ENCODE measurements at regions of chr16 and their contacts with region 1.

Region 1: DNA sequence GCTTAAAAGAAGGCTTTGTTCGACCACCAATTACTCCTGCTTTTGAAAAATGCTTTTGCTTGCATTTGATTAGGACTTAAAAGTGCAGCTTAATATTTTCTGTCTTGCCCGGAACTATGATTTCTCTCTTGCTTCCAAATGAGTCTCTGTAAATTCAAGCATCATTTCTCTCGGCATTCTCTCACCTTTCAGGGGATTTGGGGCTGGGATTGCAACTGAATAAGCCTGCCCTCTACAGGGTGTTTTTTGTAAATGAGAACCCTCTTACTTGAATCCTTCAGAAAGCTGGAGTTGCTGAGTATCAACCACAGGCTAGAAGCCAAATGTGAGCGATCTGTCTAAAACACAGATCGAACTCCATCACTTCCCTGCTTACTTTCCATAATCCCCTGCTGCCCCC is 234.6 kb downstream of the TMEM114 start:
- DNase-seq: no peak
- H3K4me3 ChIP-seq: no peak overlapping the region
- CTCF ChIP-seq: no peak
- POLR2A ChIP-seq: no peak

Region 2: DNA sequence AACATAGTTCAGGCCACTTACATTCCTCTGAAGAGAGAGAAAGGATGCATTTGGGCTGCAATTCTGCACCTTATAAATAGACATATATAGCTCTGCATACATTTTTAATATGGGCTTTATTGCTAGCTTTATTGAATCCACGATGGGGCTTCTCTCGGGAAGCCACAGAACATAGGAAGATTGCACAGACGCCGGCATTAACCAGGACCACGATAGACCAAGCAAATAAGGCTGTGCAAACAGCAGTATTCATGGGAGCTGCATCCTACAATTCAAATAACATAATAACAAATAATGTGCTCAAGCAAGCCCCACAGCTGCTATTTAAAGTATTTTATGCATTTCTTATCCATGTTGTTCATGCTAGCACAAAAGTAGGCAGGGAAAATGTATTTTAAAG is 197.6 kb before region 1 on chr16:
- intact Hi-C with region 1: loop called (anchors 5 kb)
- DNase-seq: no peak
- H3K4me3 ChIP-seq: no peak overlapping the region
- CTCF ChIP-seq: no peak
- POLR2A ChIP-seq: no peak

Region 3: GRCh38 chr16:10277597-10277996 is 1921.9 kb after region 1 on chr16:
- intact Hi-C with region 1: no loop called
- DNase-seq: peak in 1 of 2 donors; percentile 67
- H3K4me3 ChIP-seq: no peak overlapping the region
- CTCF ChIP-seq: no peak
- POLR2A ChIP-seq: no peak